A549 (cell line): ENCODE measurements at regions of chr11 and their contacts with region 1.

Region 1: GRCh38 chr11:31870609-31871309 is 59.6 kb upstream of the PAX6 start:
- DNase-seq: peak; percentile 47 to 48
- ATAC-seq: peak; percentile 83 to 94
- H3K4me3 ChIP-seq: no peak overlapping the region
- H3K27ac ChIP-seq: no peak overlapping the region
- H3K4me1 ChIP-seq: no peaks in the 10 kb centered on the region; the same call in 2 of the 3 replicates
- CTCF ChIP-seq: peak; percentile 82
- EP300 ChIP-seq: no peak
- POLR2A ChIP-seq: no peak
- RAD21 ChIP-seq: peak; percentile 91 to 92

Region 2: DNA sequence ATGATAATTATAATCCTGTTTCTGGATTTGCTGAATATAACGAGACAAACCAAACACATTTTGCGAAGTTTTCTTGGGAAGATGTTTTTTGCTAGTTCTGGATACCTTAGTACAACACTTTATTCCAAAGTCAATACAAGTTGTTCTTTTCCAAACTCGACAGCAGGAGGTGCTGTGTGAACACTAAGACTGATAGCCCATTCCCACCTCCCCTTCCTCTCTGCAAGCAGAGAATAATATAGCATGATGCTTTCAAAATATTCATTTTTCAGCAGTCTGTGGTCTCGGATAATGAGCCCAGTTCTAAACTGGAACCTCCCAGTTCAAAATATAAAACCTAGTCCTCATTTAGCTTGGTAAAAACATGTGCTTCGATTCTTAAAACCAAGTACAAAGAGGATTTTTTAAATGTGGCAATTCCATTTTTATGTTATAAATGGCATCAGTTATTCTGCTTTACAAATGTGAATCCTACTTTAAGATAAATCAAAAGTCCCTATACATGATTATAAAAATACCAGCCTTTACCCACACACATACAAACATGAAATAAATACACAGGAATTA is 630.3 kb before region 1 on chr11:
- CTCF ChIA-PET with region 1: interaction called, 27 read pairs
- POLR2A ChIA-PET with region 1: no interaction called
- DNase-seq: peak; percentile 5 to 73
- ATAC-seq: peak; percentile 43 to 88; a peak in 4 of 6 replicates
- H3K4me3 ChIP-seq: no peak overlapping the region
- H3K27ac ChIP-seq: no peak overlapping the region
- H3K4me1 ChIP-seq: peaks cover 12% of the 10 kb centered on the region; the same call in 2 of the 3 replicates
- CTCF ChIP-seq: peak; percentile 79
- EP300 ChIP-seq: no peak
- POLR2A ChIP-seq: no peak
- RAD21 ChIP-seq: peak; percentile 71

Region 3: GRCh38 chr11:31397239-31397834 is 473.4 kb before region 1 on chr11:
- CTCF ChIA-PET with region 1: interaction called, 33 read pairs
- POLR2A ChIA-PET with region 1: interaction called, 5 read pairs
- DNase-seq: peak; percentile 5 to 10
- ATAC-seq: peak in 1 of 2 experiments; percentile 52; a peak in 2 of 6 replicates
- H3K4me3 ChIP-seq: no peak overlapping the region
- H3K27ac ChIP-seq: no peak overlapping the region
- H3K4me1 ChIP-seq: no peaks in the 10 kb centered on the region
- CTCF ChIP-seq: peak; percentile 61
- EP300 ChIP-seq: no peak
- POLR2A ChIP-seq: no peak
- RAD21 ChIP-seq: peak; percentile 64 to 68; a peak in 4 of 5 replicates

Region 4: GRCh38 chr11:31487848-31488247 is 382.9 kb before region 1 on chr11:
- CTCF ChIA-PET with region 1: interaction called, 17 read pairs
- POLR2A ChIA-PET with region 1: no interaction called
- DNase-seq: peak in 1 of 2 experiments; percentile 68
- ATAC-seq: peak; percentile 73 to 75
- H3K4me3 ChIP-seq: no peak overlapping the region
- H3K27ac ChIP-seq: no peak overlapping the region
- H3K4me1 ChIP-seq: no peaks in the 10 kb centered on the region
- CTCF ChIP-seq: peak; percentile 63
- EP300 ChIP-seq: no peak
- POLR2A ChIP-seq: no peak
- RAD21 ChIP-seq: peak; percentile 64 to 68

Region 5: GRCh38 chr11:31641477-31642062 is 229.2 kb before region 1 on chr11:
- CTCF ChIA-PET with region 1: interaction called, 65 read pairs
- POLR2A ChIA-PET with region 1: no interaction called
- DNase-seq: peak; percentile 1 to 64
- ATAC-seq: 0 out of 6 replicates have a peak, but pooled peaks of 1 of the 2 experiments have one; percentile 42
- H3K4me3 ChIP-seq: no peak overlapping the region
- H3K27ac ChIP-seq: no peak overlapping the region
- H3K4me1 ChIP-seq: peaks cover 38% of the 10 kb centered on the region
- CTCF ChIP-seq: peak; percentile 80
- EP300 ChIP-seq: no peak
- POLR2A ChIP-seq: no peak
- RAD21 ChIP-seq: peak; percentile 68 to 70

Region 6: GRCh38 chr11:31860391-31860790 is 10.4 kb before region 1 on chr11:
- CTCF ChIA-PET with region 1: interaction called, 26 read pairs
- POLR2A ChIA-PET with region 1: no interaction called
- DNase-seq: no peak
- ATAC-seq: no peak
- H3K4me3 ChIP-seq: no peak overlapping the region
- H3K27ac ChIP-seq: no peak overlapping the region
- H3K4me1 ChIP-seq: no peaks in the 10 kb centered on the region
- CTCF ChIP-seq: no peak
- EP300 ChIP-seq: no peak
- POLR2A ChIP-seq: no peak
- RAD21 ChIP-seq: no peak